ENCODE measurements at regions of chr2 and their contacts with region 1.

Region 1: GRCh38 chr2:54763636-54764291 is 40.3 kb downstream of the EML6 start:
- DNase-seq: no peak
- ATAC-seq: no peak
- H3K4me3 ChIP-seq: no peak overlapping the region
- H3K27ac ChIP-seq: no peak overlapping the region
- H3K4me1 ChIP-seq: peaks cover 38% of the 10 kb centered on the region
- H3K27me3 ChIP-seq: no peaks in the 10 kb centered on the region
- CTCF ChIP-seq: peak; percentile 39

Region 2: GRCh38 chr2:54773838-54774237 is 10.1 kb after region 1 on chr2:
- CTCF ChIA-PET with region 1: no interaction called
- POLR2A ChIA-PET with region 1: no interaction called
- intact Hi-C with region 1: loop called (anchors 1 kb)
- DNase-seq: peak; percentile 40
- ATAC-seq: no peak
- H3K4me3 ChIP-seq: no peak overlapping the region
- H3K27ac ChIP-seq: peak overlapping the region; percentile 92; the same call in 1 of the 2 replicates
- H3K4me1 ChIP-seq: peaks cover 31% of the 10 kb centered on the region
- H3K27me3 ChIP-seq: no peaks in the 10 kb centered on the region
- CTCF ChIP-seq: peak; percentile 52

Region 3: DNA sequence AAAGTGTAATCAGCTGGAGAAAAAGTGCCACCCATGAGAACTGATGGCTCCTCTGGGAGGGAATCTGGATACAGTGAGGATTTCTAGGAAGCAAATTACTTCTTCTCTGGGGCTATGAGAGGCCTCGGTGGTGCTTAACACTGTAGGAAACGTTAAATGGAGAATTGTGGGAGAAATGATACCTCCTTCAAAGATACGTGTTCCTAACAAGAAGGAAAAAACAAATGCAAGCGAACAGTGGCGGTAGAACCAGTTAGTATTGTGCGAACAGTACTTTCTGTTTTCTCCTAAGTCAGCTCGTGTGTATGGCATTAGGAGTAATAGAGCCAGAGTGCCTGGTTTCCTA is 505.9 kb after region 1 on chr2:
- CTCF ChIA-PET with region 1: no interaction called
- POLR2A ChIA-PET with region 1: no interaction called
- intact Hi-C with region 1: no loop called
- DNase-seq: no peak
- ATAC-seq: no peak
- H3K4me3 ChIP-seq: peak overlapping the region; percentile 90
- H3K27ac ChIP-seq: peak overlapping the region; percentile 38
- H3K4me1 ChIP-seq: peaks cover 12% of the 10 kb centered on the region
- H3K27me3 ChIP-seq: no peaks in the 10 kb centered on the region
- CTCF ChIP-seq: no peak